Dorsolateral prefrontal cortex (tissue), 120 donors: ENCODE measurements at regions of chr1 and their contacts with region 1.

Region 1: GRCh38 chr1:145823565-145824498 is at the starts of genes POLR3C and RNF115:
- DNase-seq: peak; percentile 82 to 94 (median 90)
- H3K4me3 ChIP-seq: peak within 1 kb of the TSS; percentile 55 to 98 (median 86)
- H3K27ac ChIP-seq: peak within 1 kb of the TSS; percentile 44 to 97 (median 93)
- H3K27me3 ChIP-seq: no peaks in the 10 kb centered on the region
- CTCF ChIP-seq: peak in 34 of 56 donors; percentile 3 to 51 (median 22)
- total RNA-seq, gene POLR3C: 17.3 to 35.6 (median 26.6) TPM
- total RNA-seq, gene RNF115: 20.5 to 38.6 (median 29.2) TPM

Region 2: DNA sequence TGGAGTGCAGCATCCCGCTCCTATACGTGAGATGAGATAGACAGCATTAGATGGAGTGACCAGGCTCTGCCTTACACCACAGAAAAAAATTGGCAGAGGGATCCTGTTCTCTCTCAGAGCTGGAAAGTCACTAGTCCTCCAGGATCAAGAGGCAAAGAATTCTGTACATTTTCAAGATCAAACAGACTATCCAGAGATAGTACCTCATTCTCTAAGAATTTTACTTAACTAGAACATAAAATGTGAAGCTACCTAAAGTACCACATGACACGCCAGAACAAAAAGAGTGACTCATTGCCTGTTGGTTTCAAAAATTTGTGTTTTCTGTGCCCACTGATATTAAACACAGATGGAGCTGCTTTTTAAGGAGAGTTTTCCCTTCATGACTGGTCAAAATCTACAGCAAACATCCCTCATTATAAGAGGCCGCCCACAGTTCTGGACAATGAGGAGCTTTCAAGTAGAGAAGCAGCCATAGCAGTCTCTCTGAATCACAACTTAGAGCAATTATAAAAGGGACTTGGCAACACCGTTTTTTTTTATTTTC is 72.3 kb before region 1 on chr1:
- intact Hi-C with region 1: loop called in 1 of 2 experiments (anchors 10 kb)
- DNase-seq: peak in 4 of 10 donors; percentile 11 to 48 (median 28)
- H3K4me3 ChIP-seq: peak overlapping the region in 2 of 59 donors; percentile 7 to 9
- H3K27ac ChIP-seq: peak overlapping the region in 58 of 59 donors; percentile 5 to 83 (median 68)
- H3K27me3 ChIP-seq: no peaks in the 10 kb centered on the region
- CTCF ChIP-seq: peak in 2 of 56 donors; percentile 9 to 20

Region 3: DNA sequence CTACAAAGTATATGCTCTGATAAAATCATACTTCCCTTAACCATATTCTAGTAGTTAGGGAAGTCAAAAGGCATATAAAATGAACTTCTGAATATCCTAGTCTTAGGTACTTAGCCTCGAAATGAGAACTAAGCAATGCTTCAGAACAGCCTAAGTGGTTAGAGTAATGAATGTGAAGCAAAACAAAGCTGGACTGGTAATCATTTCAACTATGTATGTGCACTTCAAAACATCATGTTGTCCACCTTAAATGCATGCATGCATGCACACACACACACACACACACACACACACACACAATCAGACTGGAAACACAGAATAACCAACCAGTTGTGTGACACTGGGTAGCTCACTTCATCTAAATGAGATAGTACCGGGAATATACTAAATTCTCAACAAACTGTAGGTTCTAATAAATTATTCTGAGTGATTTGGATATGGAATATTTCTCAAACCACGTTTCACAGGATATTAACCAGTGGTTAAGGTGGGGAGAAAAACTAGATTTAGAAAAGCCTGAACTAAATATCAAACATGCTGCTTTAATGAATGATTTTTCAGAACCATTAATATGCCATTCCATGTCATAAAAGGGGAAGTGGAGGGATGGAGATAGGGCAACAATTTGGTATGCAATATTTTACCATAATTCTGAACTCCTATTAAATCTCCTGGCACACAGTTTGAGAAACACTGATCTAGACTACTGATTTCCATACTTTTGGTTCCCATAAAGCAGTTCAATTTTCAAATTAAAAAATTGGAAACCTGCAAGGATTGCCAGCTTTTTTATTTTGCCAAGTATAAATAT is 19.4 kb before region 1 on chr1:
- intact Hi-C with region 1: no loop called
- DNase-seq: no peak
- H3K4me3 ChIP-seq: no peak overlapping the region
- H3K27ac ChIP-seq: peak overlapping the region in 1 of 59 donors; percentile 6
- H3K27me3 ChIP-seq: no peaks in the 10 kb centered on the region
- CTCF ChIP-seq: no peak

Region 4: GRCh38 chr1:145885738-145886287 is 62.0 kb after region 1 on chr1 and contains the start of gene ANKRD35:
- intact Hi-C with region 1: loop called in 1 of 2 experiments (anchors 10 kb)
- DNase-seq: peak; percentile 78 to 91 (median 88)
- H3K4me3 ChIP-seq: peak within 1 kb of the TSS; percentile 62 to 99 (median 77)
- H3K27ac ChIP-seq: peak within 1 kb of the TSS in 30 of 59 donors; percentile 5 to 79 (median 50)
- H3K27me3 ChIP-seq: no peaks in the 10 kb centered on the region
- CTCF ChIP-seq: peak in 6 of 56 donors; percentile 3 to 25 (median 18)
- total RNA-seq, gene ANKRD35: 2.2 to 12.7 (median 7.2) TPM